Activated CD4-positive, alpha-beta T cell treated with anti-CD3 and anti-CD28 coated beads for 36 hours (primary cell): ENCODE measurements at regions of chr16 and their contacts with region 1.

Region 1: GRCh38 chr16:10944249-10945064 is at the start of gene CLEC16A:
- DNase-seq: peak; percentile 98
- ATAC-seq: peak; percentile 77
- H3K4me3 Mint-ChIP-seq: peak within 1 kb of the TSS; percentile 95
- H3K27ac Mint-ChIP-seq: peak within 1 kb of the TSS; percentile 80
- H3K4me1 Mint-ChIP-seq: peaks cover 69% of the 10 kb centered on the region
- H3K27me3 Mint-ChIP-seq: no peaks in the 10 kb centered on the region
- total RNA-seq, gene CLEC16A: 23.5 to 25.4 TPM

Region 2: GRCh38 chr16:9090960-9091866 is 1853.2 kb before region 1 on chr16 and contains the start of gene HAPSTR1:
- CTCF ChIA-PET with region 1: no interaction called
- POLR2A ChIA-PET with region 1: no interaction called
- intact Hi-C with region 1: loop called in 1 of 2 experiments (anchors 5 kb)
- DNase-seq: peak; percentile 100
- ATAC-seq: peak; percentile 94
- H3K4me3 Mint-ChIP-seq: peak within 1 kb of the TSS; percentile 89
- H3K27ac Mint-ChIP-seq: peak within 1 kb of the TSS; percentile 95
- H3K4me1 Mint-ChIP-seq: peaks cover 25% of the 10 kb centered on the region
- H3K27me3 Mint-ChIP-seq: no peaks in the 10 kb centered on the region
- total RNA-seq, gene HAPSTR1: 42.4 to 51.4 TPM

Region 3: DNA sequence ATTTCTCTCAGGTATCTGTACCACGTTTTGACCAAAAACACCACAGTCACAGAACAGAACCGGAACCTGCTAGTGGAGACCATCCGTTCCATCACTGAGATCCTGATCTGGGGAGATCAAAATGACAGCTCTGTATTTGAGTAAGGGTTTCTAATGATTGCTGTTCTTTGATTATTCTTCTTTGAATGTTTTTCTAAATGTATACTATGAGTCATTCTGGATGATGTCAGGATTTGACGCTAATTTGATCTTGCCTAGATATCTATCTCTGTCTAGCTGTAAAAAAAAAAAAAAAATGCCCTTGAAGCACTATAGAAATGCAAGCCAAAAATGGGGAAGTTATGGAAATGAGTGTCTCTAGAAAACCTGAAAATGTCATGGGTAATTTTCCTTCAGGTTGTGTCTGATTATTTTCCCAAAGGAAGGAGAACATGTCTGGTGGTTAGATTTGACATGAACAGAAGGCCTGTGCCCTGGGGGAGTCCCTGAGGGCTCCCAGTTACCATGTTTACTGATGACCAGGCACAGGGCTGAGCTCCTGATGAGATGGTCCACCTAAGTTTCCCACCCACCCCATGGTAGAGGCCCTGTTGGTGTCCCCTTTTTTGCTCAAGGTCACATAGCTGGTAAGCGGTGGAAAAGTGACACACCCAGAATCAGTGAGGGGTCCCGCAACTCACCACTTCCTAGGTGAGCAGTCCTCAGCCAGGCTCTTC is 13.5 kb after region 1 on chr16:
- CTCF ChIA-PET with region 1: interaction called, 121 read pairs
- POLR2A ChIA-PET with region 1: no interaction called
- intact Hi-C with region 1: no loop called
- DNase-seq: peak; percentile 51
- ATAC-seq: peak; percentile 82
- H3K4me3 Mint-ChIP-seq: no peak overlapping the region
- H3K27ac Mint-ChIP-seq: peak overlapping the region; percentile 88
- H3K4me1 Mint-ChIP-seq: peaks cover 68% of the 10 kb centered on the region
- H3K27me3 Mint-ChIP-seq: no peaks in the 10 kb centered on the region

Region 4: DNA sequence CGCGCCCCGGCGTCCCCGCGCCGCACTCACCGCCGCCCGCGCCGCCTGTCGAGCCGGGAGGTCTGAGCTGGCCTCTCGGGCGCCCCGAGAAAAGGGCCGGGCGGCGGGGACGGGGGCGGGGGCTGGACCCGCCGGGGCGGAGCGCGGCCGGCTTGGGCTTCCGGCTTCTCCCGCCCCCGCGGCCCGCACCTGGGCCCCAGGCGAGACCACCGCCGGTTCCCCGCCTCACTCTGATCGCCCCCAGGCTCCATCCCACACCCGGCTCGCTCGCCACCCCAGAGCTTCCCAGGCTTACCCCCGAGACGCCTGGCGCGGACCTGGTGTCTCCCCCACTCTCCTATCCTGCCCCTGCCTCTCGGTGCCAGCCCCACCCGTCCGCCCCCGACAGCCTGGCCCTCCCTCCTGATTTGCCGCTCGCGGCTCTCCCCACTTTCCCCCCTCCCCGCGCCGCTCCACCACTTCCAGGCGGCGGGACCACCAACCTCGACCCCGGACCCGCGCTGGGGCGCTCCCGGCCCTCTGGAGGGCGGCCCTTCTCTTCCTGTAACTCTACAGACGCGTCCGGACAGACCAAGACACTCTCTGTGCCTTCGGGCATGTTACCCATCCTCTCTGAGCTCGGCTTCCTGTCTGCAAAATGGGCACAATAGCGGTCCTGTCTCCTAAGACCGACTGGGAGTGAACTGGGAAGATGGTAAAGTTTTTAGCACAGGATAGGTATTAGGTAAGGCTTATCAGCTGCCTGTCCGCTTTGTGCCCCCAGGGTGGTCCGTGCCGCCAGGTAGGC is 642.6 kb after region 1 on chr16 and contains the start of gene LITAF:
- CTCF ChIA-PET with region 1: no interaction called
- POLR2A ChIA-PET with region 1: no interaction called
- intact Hi-C with region 1: loop called in 1 of 2 experiments (anchors 2 kb)
- DNase-seq: peak; percentile 74
- ATAC-seq: peak; percentile 53
- H3K4me3 Mint-ChIP-seq: peak within 1 kb of the TSS; percentile 89
- H3K27ac Mint-ChIP-seq: peak within 1 kb of the TSS; percentile 90
- H3K4me1 Mint-ChIP-seq: peaks cover 32% of the 10 kb centered on the region
- H3K27me3 Mint-ChIP-seq: no peaks in the 10 kb centered on the region
- total RNA-seq, gene LITAF: 99.0 to 116 TPM

Region 5: GRCh38 chr16:11797166-11797956 is 852.9 kb after region 1 on chr16 and contains the start of gene ZC3H7A:
- CTCF ChIA-PET with region 1: no interaction called
- POLR2A ChIA-PET with region 1: no interaction called
- intact Hi-C with region 1: loop called in 1 of 2 experiments (anchors 5 kb)
- DNase-seq: peak; percentile 97
- ATAC-seq: peak; percentile 95
- H3K4me3 Mint-ChIP-seq: peak within 1 kb of the TSS; percentile 92
- H3K27ac Mint-ChIP-seq: peak within 1 kb of the TSS; percentile 94
- H3K4me1 Mint-ChIP-seq: peaks cover 68% of the 10 kb centered on the region
- H3K27me3 Mint-ChIP-seq: no peaks in the 10 kb centered on the region
- total RNA-seq, gene ZC3H7A: 74.1 to 95.1 TPM

Region 6: GRCh38 chr16:11977376-11978041 is 1033.1 kb after region 1 on chr16:
- CTCF ChIA-PET with region 1: no interaction called
- POLR2A ChIA-PET with region 1: no interaction called
- intact Hi-C with region 1: loop called in 1 of 2 experiments (anchors 5 kb)
- DNase-seq: no peak
- ATAC-seq: no peak
- H3K4me3 Mint-ChIP-seq: peak overlapping the region; percentile 88
- H3K27ac Mint-ChIP-seq: peak overlapping the region; percentile 30
- H3K4me1 Mint-ChIP-seq: peaks cover 39% of the 10 kb centered on the region
- H3K27me3 Mint-ChIP-seq: no peaks in the 10 kb centered on the region